MCF 10A (cell line): ENCODE measurements at regions of chrX and their contacts with region 1.

Region 1: GRCh38 chrX:115679460-115679859 is 118.5 kb downstream of the PLS3 start:
- DNase-seq: peak; percentile 52
- H3K4me3 Mint-ChIP-seq: no peak overlapping the region
- H3K27ac Mint-ChIP-seq: no peak overlapping the region
- H3K4me1 Mint-ChIP-seq: no peaks in the 10 kb centered on the region
- H3K27me3 Mint-ChIP-seq: peaks cover 34% of the 10 kb centered on the region
- CTCF ChIP-seq: peak; percentile 37

Region 2: DNA sequence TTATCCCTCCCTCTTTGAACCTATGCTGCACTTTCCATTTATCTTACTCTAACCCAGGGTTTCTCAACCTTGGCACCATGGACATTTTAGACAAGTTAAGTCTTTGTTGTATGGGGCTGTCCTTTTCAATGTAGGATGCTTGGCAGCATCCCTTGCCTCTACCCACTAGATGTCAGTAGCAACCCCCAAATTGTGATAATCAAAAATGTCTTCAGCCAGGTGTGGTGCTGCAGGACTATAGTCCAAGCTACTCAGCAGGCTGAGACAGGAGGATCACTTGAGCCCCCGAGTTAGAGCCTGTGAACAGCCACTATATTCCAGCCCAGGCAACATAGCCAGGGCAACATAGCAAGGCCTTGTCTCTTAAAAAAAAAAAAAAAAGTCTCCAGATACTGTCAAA is 452.5 kb before region 1 on chrX:
- CTCF ChIA-PET with region 1: no interaction called
- POLR2A ChIA-PET with region 1: no interaction called
- intact Hi-C with region 1: loop called (anchors 10 kb)
- DNase-seq: peak; percentile 56
- H3K4me3 Mint-ChIP-seq: no peak overlapping the region
- H3K27ac Mint-ChIP-seq: no peak overlapping the region
- H3K4me1 Mint-ChIP-seq: no peaks in the 10 kb centered on the region
- H3K27me3 Mint-ChIP-seq: peaks cover 77% of the 10 kb centered on the region
- CTCF ChIP-seq: peak; percentile 43

Region 3: GRCh38 chrX:115251458-115252233 is 427.8 kb before region 1 on chrX:
- CTCF ChIA-PET with region 1: no interaction called
- POLR2A ChIA-PET with region 1: no interaction called
- intact Hi-C with region 1: no loop called
- DNase-seq: no peak
- H3K4me3 Mint-ChIP-seq: no peak overlapping the region
- H3K27ac Mint-ChIP-seq: no peak overlapping the region
- H3K4me1 Mint-ChIP-seq: no peaks in the 10 kb centered on the region
- H3K27me3 Mint-ChIP-seq: peaks cover 83% of the 10 kb centered on the region
- CTCF ChIP-seq: no peak

Region 4: GRCh38 chrX:115330498-115331168 is 348.8 kb before region 1 on chrX:
- CTCF ChIA-PET with region 1: interaction called, 4 read pairs
- POLR2A ChIA-PET with region 1: no interaction called
- intact Hi-C with region 1: loop called (anchors 1 kb)
- DNase-seq: peak; percentile 70
- H3K4me3 Mint-ChIP-seq: no peak overlapping the region
- H3K27ac Mint-ChIP-seq: no peak overlapping the region
- H3K4me1 Mint-ChIP-seq: no peaks in the 10 kb centered on the region
- H3K27me3 Mint-ChIP-seq: peaks cover 55% of the 10 kb centered on the region
- CTCF ChIP-seq: peak; percentile 71